Activated T-helper 1 cell treated with anti-CD3 and anti-CD28 coated beads, Interleukin-12 subunit alpha, Interleukin-12 subunit beta, Interleukin-2, Interleukin-4 antibody, amounts not matched to agents 30 ng/mL and 10 ng/mL and 1 ng/mL, durations not matched to agents 14 hours and 24 hours and 36 hours (primary cell): ENCODE measurements at regions of chr7 and their contacts with region 1.

Region 1: GRCh38 chr7:30062591-30062990 is 34.4 kb downstream of the PLEKHA8 start:
- DNase-seq: no peak
- H3K4me3 Mint-ChIP-seq: no peak overlapping the region
- H3K27ac Mint-ChIP-seq: no peak overlapping the region
- H3K4me1 Mint-ChIP-seq: no peaks in the 10 kb centered on the region
- H3K27me3 Mint-ChIP-seq: no peaks in the 10 kb centered on the region

Region 2: DNA sequence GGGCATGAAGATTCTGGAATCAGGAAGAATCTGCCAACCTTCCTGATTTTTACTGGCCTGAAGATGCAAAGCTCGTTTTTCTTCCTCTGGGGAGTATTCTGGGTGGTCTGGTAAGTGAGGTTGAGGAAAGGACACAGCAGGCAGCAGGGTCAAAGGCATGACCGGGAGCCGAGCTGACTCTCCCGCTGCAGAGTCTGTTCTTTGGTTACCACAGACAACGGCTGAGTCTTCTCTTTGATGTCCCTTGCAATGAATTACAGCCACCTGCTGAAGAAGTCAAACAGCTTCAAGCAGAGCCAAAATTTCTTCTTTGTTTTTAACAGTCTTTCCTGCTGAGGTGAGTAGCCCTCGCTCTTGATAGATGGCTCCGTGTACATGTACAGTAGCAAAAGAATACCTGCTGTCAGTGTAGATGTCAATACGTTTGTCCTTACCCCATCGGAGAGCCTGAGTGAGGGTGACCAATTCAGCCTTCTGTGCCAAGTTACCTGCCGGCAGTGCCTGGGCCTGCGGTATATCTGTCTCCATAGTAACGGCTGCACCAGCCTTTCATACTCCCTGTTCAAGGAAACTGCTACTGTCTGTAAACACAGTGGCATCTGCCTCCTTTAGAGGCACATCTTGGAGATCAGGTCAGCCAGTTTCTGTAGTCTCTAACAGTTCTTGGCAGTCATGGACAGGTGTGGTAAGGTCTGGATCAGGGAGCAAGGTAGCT is 422.6 kb before region 1 on chr7:
- intact Hi-C with region 1: loop called (anchors 10 kb)
- DNase-seq: no peak
- H3K4me3 Mint-ChIP-seq: no peak overlapping the region
- H3K27ac Mint-ChIP-seq: no peak overlapping the region
- H3K4me1 Mint-ChIP-seq: no peaks in the 10 kb centered on the region
- H3K27me3 Mint-ChIP-seq: no peaks in the 10 kb centered on the region

Region 3: DNA sequence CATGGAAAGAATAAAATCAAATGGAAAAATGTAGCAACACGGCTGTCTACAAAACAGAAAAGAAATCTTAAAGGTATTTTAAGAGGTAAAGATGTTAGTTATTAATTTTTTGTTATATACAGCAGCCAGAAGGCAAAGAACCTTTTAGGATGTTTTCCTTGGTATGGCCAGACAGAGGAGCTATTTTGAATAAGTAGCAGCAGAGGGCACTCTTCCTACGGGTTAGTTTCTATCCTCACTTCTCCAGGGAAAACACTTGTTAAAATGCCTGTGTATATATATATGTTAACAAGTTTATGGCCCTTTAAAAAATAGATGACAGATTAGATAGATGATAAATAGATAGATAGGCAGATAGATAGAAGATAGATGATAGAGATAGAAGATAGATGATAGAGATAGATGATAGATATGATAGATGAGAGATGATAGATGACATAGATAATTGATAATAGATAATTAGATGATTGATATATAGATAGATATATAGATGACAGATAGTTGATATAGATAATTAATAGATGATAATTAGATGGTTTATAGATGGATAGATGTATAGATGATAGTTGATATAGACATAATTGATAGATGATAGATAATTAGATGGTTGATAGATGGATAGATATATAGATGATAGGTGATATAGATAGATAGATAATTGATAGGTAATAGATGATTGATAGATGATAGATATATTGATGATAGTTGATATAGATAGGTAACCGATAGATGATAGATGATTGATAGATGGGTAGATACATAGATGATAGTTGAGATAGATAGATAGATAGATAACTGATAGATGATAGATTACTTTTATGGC is 314.1 kb before region 1 on chr7:
- intact Hi-C with region 1: loop called (anchors 2 kb)
- DNase-seq: no peak
- H3K4me3 Mint-ChIP-seq: no peak overlapping the region
- H3K27ac Mint-ChIP-seq: no peak overlapping the region
- H3K4me1 Mint-ChIP-seq: no peaks in the 10 kb centered on the region
- H3K27me3 Mint-ChIP-seq: peaks cover 7% of the 10 kb centered on the region

Region 4: DNA sequence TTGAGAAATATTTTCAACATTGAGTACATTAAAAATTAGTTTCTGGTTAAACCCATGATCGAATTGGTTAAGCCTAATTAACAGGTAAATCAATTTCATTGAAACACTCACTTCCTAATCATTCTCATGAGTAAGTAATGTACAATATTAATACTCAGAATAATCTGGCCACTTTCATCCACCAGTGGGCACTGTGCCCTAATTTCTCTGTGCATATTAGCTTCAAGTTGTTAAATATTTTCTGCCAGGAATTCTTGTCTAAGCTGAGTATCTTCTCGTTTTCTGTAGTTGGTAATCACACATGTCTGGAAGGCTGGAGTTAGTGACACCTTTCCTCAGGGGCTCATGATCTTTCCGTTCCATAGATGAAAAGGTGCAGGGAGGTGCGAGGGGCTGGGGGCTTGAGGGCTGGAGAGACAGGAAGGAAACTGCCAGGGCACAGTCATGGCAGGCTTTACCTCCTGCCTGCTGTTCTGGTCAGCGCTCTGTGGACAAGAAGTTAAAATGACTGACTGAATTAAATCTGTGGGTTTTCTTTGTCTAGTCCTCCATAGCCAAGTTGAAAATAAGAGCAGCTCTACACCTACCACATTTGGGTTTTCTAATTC is 184.4 kb before region 1 on chr7:
- intact Hi-C with region 1: loop called (anchors 1 kb)
- DNase-seq: no peak
- H3K4me3 Mint-ChIP-seq: no peak overlapping the region
- H3K27ac Mint-ChIP-seq: no peak overlapping the region
- H3K4me1 Mint-ChIP-seq: no peaks in the 10 kb centered on the region
- H3K27me3 Mint-ChIP-seq: peaks cover 11% of the 10 kb centered on the region

Region 5: DNA sequence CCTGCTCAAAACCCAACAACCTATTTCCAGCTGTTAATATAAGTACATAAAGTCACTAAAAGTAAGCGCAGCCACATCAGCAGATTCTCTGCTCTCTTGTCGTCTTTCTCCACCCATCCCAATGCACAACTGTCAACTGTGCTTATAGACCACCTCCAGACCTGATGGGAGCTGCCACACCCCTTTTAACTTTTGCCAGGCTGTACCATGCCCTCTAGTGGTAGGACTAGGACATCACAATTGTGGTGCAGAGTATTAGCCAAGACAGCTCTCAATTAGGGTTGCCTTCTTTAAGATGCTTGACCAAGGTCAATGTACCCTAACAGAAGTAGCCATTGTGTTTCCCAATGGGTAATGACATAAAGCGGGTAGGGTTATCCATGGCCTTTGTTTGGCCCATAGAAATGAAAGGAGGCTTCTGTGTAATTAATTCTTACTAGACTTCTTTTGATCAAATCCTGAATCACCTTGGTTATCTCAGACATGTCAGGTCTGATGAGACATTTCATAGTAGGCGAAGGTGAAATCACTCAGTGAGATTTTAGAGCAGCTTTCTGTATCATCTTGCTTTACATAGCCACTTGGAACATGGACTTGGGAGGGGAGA is 141.1 kb before region 1 on chr7:
- intact Hi-C with region 1: loop called (anchors 5 kb)
- DNase-seq: peak; percentile 23
- H3K4me3 Mint-ChIP-seq: no peak overlapping the region
- H3K27ac Mint-ChIP-seq: no peak overlapping the region
- H3K4me1 Mint-ChIP-seq: no peaks in the 10 kb centered on the region
- H3K27me3 Mint-ChIP-seq: no peaks in the 10 kb centered on the region

Region 6: DNA sequence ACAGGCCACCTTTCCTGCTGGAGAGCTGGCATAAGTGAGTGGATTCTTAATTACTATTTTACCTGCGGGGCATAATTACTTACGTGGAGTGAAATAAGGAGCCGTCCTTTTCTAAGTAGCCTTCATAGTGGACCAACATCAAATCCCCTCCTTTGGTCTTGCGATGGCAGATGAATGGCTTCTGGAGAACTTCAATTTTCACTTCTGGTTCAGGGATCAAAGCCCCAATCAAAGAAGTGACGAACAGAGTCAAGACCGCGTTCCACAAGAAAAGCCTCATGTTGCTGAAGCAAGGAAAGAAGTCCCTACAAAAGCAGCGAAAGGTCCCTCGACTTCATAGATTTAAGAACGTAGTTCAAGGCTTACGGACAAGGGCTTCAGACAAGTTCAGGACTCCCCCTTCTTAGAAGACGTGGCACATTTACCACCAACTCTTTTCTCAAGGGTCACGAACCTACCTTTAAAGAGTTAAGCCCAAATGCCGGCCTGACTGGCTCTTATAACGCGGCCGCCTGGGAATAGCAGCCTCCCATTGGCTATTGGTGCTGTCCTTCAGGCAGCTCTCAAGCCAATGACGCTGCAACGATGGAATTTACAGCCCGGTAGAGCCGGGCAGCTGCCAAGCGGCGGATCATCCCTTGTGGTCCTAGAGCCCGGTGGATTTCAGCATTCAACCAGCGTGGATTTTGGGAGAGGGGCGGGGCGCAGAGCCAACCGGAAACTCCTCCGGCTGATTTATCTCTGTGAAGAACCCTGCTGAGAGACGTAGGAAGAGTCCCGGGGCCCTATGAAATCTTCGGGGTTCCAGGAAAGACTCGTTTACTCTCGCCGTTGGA is 36.1 kb before region 1 on chr7 and contains the start of gene FKBP14:
- intact Hi-C with region 1: loop called (anchors 1 kb)
- DNase-seq: peak; percentile 91
- H3K4me3 Mint-ChIP-seq: no peak within 1 kb of the TSS
- H3K27ac Mint-ChIP-seq: peak within 1 kb of the TSS; percentile 89
- H3K4me1 Mint-ChIP-seq: peaks cover 44% of the 10 kb centered on the region
- H3K27me3 Mint-ChIP-seq: no peaks in the 10 kb centered on the region
- total RNA-seq, gene FKBP14: 8.4 and 10.6 TPM in 2 replicates

Region 7: DNA sequence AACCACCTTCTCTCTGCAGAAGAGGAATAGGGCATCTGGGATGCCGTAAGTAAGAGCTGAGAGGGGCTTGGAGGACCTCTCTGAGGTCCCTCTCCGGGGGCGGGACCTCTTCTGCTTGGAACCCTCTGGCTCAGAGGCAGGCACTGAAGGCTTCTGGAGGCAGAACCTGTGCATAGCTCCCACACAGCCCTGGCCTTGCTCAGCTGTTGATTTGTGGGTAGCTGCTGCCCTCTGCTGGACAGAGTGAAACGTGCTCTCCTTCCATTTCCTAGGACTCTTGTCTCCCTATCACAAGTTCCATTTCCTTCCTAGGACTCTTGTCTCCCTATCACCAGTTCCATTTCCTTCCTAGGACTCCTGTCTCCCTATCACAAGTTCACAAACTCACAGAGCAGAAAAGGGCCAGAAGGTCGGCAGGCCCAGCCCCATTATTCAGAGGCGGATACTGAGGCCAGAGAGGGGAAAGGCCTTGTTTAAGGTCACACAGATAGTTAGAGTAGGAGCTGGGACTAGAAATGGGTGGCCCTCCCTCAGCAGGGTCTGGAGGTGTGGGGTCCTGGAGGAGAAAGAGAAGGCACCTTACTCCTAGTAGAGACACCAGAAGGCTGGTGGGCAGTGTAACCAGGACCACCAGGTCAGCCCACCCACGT is 501.8 kb after region 1 on chr7:
- intact Hi-C with region 1: loop called (anchors 10 kb)
- DNase-seq: peak; percentile 65
- H3K4me3 Mint-ChIP-seq: no peak overlapping the region
- H3K27ac Mint-ChIP-seq: peak overlapping the region; percentile 13
- H3K4me1 Mint-ChIP-seq: no peaks in the 10 kb centered on the region
- H3K27me3 Mint-ChIP-seq: no peaks in the 10 kb centered on the region